ENCODE measurements at regions of chr2 and their contacts with region 1.

Region 1: DNA sequence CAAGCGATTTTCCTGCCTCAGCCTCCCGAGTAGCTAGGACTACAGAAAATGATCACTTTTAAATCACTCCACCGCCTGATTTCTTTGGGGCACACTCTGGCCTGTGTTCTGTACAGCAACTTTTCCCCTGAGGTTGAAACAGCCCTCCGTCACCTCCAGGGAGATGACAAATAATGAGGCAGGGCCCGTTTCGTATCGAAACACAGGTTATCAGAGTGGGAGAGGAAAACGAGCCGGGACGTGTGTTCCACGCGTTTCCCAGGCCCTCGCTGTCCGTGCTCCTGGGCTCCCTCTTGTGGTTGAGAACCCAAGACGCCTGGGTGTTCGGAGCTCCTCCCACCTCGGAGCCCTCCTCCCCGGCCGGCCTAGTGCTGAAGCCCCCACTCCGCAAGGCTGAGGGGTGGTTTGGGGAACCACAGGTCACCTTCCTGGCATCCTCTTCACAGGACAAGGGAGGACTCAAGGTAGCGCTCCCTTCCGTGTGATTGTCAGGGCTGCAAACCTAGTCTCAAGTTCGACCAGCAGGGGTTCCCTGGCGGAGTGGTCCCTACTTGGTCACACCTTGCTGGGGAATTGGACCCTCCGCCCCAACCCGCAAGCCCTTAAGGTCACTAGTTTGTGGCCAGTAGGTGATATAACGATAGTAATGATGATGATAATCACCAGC is 12.8 kb downstream of the ATP6V1B1 start:
- DNase-seq: peak; percentile 84 to 88
- H3K4me3 ChIP-seq: peak overlapping the region; percentile 6; the same call in 1 of the 2 replicates
- H3K4me3 Mint-ChIP-seq: peak overlapping the region; percentile 75
- H3K27ac Mint-ChIP-seq: peak overlapping the region; percentile 30
- H3K4me1 ChIP-seq: no peaks in the 10 kb centered on the region
- H3K4me1 Mint-ChIP-seq: peaks cover 15% of the 10 kb centered on the region
- H3K27me3 ChIP-seq: no peaks in the 10 kb centered on the region
- H3K27me3 Mint-ChIP-seq: peaks cover 6% of the 10 kb centered on the region
- CTCF ChIP-seq: peak; percentile 89 to 90

Region 2: DNA sequence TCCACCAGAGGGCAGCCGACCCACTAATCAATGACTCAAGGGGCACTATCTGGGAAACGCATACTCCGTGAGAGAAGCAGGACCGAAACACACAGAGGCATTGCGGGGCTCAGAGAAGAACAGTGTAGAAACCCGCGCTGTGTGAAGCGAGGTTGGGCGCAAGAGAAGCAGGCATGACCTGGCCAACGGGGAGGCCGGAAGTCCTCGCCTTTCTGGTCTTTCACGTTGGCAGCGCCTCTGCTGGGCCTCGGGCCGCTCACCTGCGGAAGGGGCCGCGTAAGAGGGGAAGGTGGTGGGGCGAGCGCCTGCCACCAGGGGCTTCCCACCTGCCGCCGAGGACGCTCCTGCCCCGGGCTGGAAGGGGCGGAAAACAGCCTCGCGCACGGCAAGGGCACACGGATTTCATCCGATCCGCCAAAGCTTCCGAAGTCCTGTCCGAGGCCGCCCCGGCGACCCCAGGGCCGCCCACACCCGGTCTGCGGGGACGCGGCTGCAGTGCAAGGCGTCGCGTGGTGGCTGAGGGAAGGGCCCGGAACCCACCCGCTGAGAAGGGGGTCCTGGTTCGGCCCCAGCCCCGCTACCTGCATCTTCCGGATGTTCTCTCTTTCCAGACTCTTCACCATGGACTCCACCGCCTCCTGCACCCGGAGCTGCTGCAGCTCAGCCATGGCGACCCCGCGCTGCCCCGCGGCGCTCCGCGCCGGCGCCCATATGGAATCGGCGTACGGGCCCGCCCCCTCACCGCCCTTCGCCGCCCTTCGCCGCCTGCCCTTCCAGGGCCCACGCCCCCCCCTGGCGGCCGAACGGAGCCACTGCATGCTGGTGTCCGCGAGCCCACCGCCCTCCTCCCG is 646.9 kb before region 1 on chr2 and contains the start of gene FAM136A:
- CTCF ChIA-PET with region 1: interaction called, 8 read pairs
- POLR2A ChIA-PET with region 1: interaction called, 16 read pairs
- intact Hi-C with region 1: no loop called
- DNase-seq: peak; percentile 91 to 98
- H3K4me3 ChIP-seq: peak within 1 kb of the TSS; percentile 99
- H3K4me3 Mint-ChIP-seq: peak within 1 kb of the TSS; percentile 96
- H3K27ac Mint-ChIP-seq: peak within 1 kb of the TSS; percentile 95
- H3K4me1 ChIP-seq: peaks cover 5% of the 10 kb centered on the region
- H3K4me1 Mint-ChIP-seq: no peaks in the 10 kb centered on the region
- H3K27me3 ChIP-seq: no peaks in the 10 kb centered on the region
- H3K27me3 Mint-ChIP-seq: no peaks in the 10 kb centered on the region
- CTCF ChIP-seq: peak; percentile 94 to 95
- total RNA-seq, gene FAM136A: 115 and 120 TPM in 2 replicates

Region 3: GRCh38 chr2:70861777-70862625 is 86.5 kb before region 1 on chr2:
- CTCF ChIA-PET with region 1: interaction called, 9 read pairs
- POLR2A ChIA-PET with region 1: no interaction called
- intact Hi-C with region 1: loop called (anchors 1 kb)
- DNase-seq: peak; percentile 82 to 92
- H3K4me3 ChIP-seq: no peak overlapping the region
- H3K4me3 Mint-ChIP-seq: no peak overlapping the region
- H3K27ac Mint-ChIP-seq: no peak overlapping the region
- H3K4me1 ChIP-seq: no peaks in the 10 kb centered on the region
- H3K4me1 Mint-ChIP-seq: peaks cover 6% of the 10 kb centered on the region
- H3K27me3 ChIP-seq: no peaks in the 10 kb centered on the region; the same call in none of the 2 replicates
- H3K27me3 Mint-ChIP-seq: peaks cover 29% of the 10 kb centered on the region
- CTCF ChIP-seq: peak; percentile 96 to 98

Region 4: DNA sequence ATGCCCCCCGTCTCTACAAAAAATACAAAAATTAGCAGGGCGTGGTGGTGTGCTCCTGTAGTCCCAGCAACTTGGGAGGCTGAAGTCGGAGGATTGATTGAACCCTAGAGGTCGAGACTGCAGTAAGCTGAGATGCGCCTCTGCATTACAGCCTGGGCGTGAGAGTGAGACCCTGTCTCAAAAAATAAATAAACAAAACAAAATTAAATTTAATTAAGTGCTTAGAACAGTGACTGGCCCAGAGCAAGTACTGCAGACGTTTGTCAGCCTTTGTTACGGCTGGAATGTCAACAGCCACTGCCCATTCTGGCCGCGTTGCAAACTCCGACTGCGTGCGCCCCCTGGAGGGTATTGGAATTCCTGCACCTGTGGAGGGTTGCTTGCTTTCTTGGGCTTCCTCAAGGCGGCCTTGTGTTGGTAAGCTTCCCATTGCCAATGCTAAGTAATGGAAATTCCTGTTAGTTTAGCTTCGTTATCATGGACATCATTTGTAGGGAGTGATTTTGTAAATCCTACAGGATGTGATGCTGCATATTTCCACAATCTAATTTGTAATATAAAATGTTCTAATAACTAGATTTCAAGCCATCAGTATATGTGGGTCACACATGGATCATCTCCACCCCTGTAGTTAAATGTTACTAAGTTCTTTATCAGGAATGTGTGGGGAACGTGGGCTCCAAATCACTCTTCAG is 28.7 kb before region 1 on chr2:
- CTCF ChIA-PET with region 1: interaction called, 5 read pairs
- POLR2A ChIA-PET with region 1: no interaction called
- intact Hi-C with region 1: loop called (anchors 2 kb)
- DNase-seq: peak; percentile 84 to 93
- H3K4me3 ChIP-seq: no peak overlapping the region
- H3K4me3 Mint-ChIP-seq: no peak overlapping the region
- H3K27ac Mint-ChIP-seq: no peak overlapping the region
- H3K4me1 ChIP-seq: peaks cover 6% of the 10 kb centered on the region; the same call in 1 of the 2 replicates
- H3K4me1 Mint-ChIP-seq: no peaks in the 10 kb centered on the region
- H3K27me3 ChIP-seq: no peaks in the 10 kb centered on the region
- H3K27me3 Mint-ChIP-seq: peaks cover 5% of the 10 kb centered on the region
- CTCF ChIP-seq: peak; percentile 94 to 96

Region 5: GRCh38 chr2:70977605-70978205 is 29.2 kb after region 1 on chr2:
- CTCF ChIA-PET with region 1: interaction called, 5 read pairs
- POLR2A ChIA-PET with region 1: no interaction called
- intact Hi-C with region 1: loop called (anchors 2 kb)
- DNase-seq: no peak
- H3K4me3 ChIP-seq: no peak overlapping the region
- H3K4me3 Mint-ChIP-seq: peak overlapping the region; percentile 75
- H3K27ac Mint-ChIP-seq: no peak overlapping the region
- H3K4me1 ChIP-seq: peaks cover 10% of the 10 kb centered on the region; the same call in 1 of the 2 replicates
- H3K4me1 Mint-ChIP-seq: peaks cover 7% of the 10 kb centered on the region
- H3K27me3 ChIP-seq: no peaks in the 10 kb centered on the region
- H3K27me3 Mint-ChIP-seq: no peaks in the 10 kb centered on the region
- CTCF ChIP-seq: no peak